GM23248 (cell line): ENCODE measurements at regions of chr3 and their contacts with region 1.

Region 1: DNA sequence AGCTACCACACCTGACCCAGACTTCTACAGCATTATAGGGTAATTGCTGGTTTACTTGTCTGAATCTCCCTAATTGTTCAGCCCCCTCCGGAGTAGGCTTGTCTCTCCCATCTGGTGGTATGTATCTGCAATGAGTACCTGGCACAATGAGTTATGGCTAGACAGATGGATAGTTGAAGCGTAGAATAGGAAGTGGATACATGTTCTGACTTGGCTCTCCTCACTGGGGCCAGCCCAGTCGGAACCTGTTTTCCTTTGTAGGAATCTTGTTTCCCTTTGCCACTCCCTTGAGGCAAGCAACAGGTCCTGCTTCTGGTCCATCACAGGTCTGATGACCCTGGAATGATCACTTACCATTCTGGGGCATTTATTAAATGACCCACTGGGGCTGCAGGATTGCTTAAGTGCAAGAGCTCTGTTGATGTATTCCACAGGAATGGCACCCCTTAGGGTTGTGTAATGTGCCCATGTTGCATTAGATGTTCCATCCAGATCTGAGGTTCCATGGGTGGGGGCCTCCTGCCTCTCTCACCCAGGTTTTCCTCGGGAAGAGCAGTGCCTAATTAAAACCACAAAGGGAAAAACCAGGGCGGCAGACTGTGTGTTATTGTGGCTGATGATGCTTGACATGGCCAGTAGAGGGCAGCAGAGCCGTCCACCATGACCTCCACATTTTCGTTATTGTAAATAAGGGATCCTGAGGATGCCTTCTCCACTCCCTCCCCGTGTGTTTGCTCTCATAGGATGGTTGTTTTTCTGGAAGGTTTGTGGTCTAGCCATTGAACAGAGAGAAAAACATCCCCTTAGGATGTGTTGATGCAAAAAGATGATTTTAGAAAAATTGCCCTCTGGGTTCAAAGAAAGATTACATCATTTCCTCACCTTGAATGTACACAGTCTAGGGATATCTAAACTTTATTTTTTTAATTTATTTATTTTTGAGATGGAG is 58.0 kb downstream of the CMTM8 start:
- DNase-seq: peak; percentile 69
- H3K4me3 ChIP-seq: no peak overlapping the region
- H3K27ac ChIP-seq: no peak overlapping the region
- H3K4me1 ChIP-seq: no peaks in the 10 kb centered on the region
- H3K27me3 ChIP-seq: peaks cover under 1% of the 10 kb centered on the region

Region 2: GRCh38 chr3:32467333-32468070 is 171.0 kb after region 1 on chr3:
- in situ Hi-C with region 1: loop called (anchors 10 kb)
- DNase-seq: peak; percentile 66
- H3K4me3 ChIP-seq: no peak overlapping the region
- H3K27ac ChIP-seq: no peak overlapping the region
- H3K4me1 ChIP-seq: peaks cover 16% of the 10 kb centered on the region
- H3K27me3 ChIP-seq: no peaks in the 10 kb centered on the region